Lower leg skin (tissue), 4 donors: ENCODE measurements at regions of chr3 and their contacts with region 1.

Region 1: DNA sequence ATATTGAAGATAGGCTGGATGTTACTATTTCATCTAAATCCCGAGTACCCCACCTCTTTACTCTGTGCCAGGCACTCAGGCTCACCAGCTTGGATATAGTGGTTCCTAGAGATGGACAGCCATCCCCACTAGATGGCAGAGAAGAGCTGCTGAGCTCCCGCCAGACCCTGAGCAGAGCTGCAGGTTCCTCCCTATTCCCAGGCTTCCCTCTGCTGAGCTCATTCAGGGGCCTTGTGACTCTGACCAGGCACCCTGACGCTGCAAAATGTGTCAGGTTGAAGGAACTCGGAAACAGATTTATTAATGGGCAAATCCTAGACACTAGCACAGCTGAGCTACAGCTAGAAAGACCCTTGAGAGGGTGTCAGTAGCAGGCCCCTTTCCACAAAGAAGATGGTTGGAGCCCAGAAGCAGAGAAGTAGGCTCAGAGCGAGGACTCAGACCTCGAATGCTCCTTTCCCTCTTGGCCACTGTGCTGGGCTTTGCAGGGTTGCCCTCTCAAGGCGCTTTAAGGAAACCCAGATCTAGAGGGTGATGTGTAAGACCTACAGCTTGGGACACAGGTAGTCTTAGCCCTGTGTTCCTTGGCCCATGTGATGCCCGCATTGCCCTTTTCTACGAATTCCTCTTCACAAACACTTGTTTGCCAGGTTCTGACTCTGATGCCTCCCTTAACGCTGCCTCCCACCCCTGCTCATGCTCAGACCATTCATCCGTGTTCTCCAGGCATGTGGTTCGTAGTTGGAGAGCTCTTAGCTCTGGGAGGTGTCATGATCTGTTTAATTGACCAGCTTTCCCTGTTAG is 38.0 kb upstream of the RHO start:
- DNase-seq: peak; percentile 87 to 96
- H3K4me3 ChIP-seq: no peak overlapping the region
- CTCF ChIP-seq: peak in 1 of 3 donors; percentile 90
- POLR2A ChIP-seq: no peak

Region 2: GRCh38 chr3:129295286-129295685 is 195.2 kb before region 1 on chr3:
- intact Hi-C with region 1: no loop called
- DNase-seq: no peak
- H3K4me3 ChIP-seq: no peak overlapping the region
- CTCF ChIP-seq: no peak
- POLR2A ChIP-seq: no peak

Region 3: GRCh38 chr3:129627429-129628168 is 137.2 kb after region 1 on chr3:
- intact Hi-C with region 1: loop called (anchors 10 kb)
- DNase-seq: peak in 1 of 2 donors; percentile 93
- H3K4me3 ChIP-seq: peak overlapping the region; percentile 21
- CTCF ChIP-seq: peak in 1 of 3 donors; percentile 79
- POLR2A ChIP-seq: no peak

Region 4: DNA sequence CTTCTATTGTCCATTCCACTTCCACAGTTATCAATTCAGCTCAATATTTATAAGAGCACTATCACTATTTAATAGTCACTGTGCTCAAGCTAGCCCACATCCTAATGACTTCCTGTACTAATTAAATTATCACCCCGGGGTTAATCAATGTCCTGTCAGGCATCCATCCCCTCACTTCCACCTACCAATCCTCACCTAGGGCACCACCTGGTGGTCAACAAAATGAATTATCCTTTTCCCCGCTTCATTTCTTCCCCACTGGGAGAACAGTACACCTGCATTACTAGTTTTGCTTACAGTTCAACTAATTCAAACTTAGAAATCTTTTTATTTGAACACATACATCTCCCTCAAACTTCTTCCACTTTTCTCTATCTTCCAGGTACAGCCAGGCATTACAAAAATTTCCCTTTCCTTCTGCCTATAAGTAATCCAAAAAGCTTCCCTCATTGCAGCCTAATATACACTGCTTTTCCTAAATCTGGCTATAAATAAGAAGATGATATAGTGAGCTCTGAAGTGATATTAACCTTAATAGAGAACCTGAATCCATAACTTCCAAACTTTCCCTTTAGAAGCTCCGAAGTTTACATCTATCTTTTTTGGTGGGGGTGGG is 334.6 kb after region 1 on chr3:
- intact Hi-C with region 1: loop called (anchors 10 kb)
- DNase-seq: no peak
- H3K4me3 ChIP-seq: no peak overlapping the region
- CTCF ChIP-seq: peak in 1 of 3 donors; percentile 59
- POLR2A ChIP-seq: no peak

Region 5: DNA sequence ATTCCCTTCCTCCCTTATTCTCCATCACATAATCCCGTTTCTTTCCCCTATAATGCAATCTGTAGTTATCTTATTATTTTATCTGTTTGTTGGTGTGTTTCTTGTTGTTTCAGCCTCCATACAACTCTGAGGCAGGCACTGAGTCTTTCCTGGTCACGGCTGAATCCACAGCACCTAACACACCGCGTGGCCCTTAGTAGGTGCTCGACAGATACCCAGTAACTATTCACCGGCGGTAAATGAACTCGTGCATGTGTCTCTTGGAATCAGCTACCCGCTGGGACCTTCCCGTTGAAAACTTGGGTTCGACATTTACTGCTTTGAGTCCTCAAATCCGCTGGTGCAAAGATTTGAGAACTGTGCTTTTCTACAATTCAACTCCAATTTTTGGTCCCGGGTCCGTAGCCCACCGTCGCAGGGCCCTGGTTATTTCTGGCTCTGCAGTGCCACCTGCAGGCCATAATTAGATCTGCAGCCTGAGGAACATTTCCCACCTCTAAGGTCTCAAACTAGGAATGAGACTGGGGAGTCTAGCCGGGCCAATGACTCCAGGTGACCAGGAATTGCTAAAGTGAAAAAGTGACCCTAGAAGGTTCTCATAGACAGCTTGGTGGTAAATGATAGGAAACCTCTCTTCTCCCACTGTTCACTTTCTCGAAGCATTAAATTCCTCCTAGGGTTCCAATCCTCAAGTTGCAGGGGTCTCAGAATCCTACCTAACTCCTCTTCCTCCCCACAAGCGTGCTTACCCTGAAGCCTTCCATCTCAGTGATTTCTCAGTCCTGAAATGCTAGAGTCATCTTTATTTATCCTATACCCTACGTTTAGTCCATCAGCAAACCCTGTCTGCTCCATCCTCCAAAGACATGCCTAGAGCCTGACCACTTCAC is 444.0 kb after region 1 on chr3:
- intact Hi-C with region 1: loop called (anchors 10 kb)
- DNase-seq: peak in 1 of 2 donors; percentile 22
- H3K4me3 ChIP-seq: no peak overlapping the region
- CTCF ChIP-seq: peak in 1 of 3 donors; percentile 48
- POLR2A ChIP-seq: no peak

Region 6: DNA sequence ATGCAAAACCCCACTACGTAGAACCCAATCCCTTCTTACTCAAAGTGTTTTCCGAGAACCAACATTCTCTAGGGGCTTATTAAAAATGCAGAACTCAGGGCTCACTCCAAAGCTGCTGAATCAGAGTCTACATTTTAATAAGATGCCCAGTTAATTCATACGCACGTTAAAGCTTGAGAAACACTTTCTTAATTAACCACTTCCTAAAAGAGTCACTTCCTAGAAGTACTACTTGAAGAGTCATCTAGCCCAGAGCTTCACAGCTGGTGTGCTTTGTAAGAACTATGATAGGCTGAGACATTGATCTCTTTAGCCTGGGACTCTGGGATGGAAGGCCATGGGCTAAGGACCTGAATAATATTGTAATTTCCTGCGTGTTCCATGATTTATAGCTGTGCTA is 864.0 kb after region 1 on chr3:
- intact Hi-C with region 1: no loop called
- DNase-seq: no peak
- H3K4me3 ChIP-seq: no peak overlapping the region
- CTCF ChIP-seq: no peak
- POLR2A ChIP-seq: no peak